Calu3 (cell line): ENCODE measurements at regions of chr5 and their contacts with region 1.

Region 1: GRCh38 chr5:112434641-112435040 is 15.6 kb upstream of the EPB41L4A start:
- DNase-seq: no peak
- H3K4me3 Mint-ChIP-seq: no peak overlapping the region
- H3K27ac Mint-ChIP-seq: no peak overlapping the region
- H3K4me1 Mint-ChIP-seq: peaks cover 20% of the 10 kb centered on the region
- H3K27me3 Mint-ChIP-seq: no peaks in the 10 kb centered on the region
- CTCF ChIP-seq: no peak

Region 2: GRCh38 chr5:111892949-111893348 is 541.7 kb before region 1 on chr5:
- CTCF ChIA-PET with region 1: no interaction called
- intact Hi-C with region 1: no loop called
- DNase-seq: no peak
- H3K4me3 Mint-ChIP-seq: no peak overlapping the region
- H3K27ac Mint-ChIP-seq: no peak overlapping the region
- H3K4me1 Mint-ChIP-seq: no peaks in the 10 kb centered on the region
- H3K27me3 Mint-ChIP-seq: no peaks in the 10 kb centered on the region
- CTCF ChIP-seq: no peak

Region 3: DNA sequence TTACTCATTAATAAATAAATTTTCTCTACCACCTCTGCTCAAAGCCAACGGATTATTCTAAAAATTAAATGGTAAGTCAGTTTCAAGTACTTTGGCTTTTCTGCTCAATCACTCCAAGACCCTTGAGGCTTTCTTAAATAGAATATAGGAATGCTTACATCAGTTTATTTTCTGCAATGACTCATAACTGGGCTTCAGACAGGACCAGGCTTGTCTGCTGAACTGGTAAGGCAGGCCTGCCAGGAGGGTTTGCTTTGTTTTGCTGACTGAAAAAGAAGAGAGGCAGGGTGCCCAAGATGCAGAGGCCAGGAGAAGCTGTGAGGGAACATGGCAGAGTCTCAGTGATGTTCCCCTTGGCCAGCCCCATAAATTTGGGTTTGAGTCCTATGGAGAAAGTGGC is 44.8 kb after region 1 on chr5:
- CTCF ChIA-PET with region 1: no interaction called
- intact Hi-C with region 1: loop called (anchors 5 kb)
- DNase-seq: peak; percentile 64
- H3K4me3 Mint-ChIP-seq: no peak overlapping the region
- H3K27ac Mint-ChIP-seq: no peak overlapping the region
- H3K4me1 Mint-ChIP-seq: peaks cover 31% of the 10 kb centered on the region
- H3K27me3 Mint-ChIP-seq: no peaks in the 10 kb centered on the region
- CTCF ChIP-seq: no peak

Region 4: GRCh38 chr5:112833971-112834370 is 399.3 kb after region 1 on chr5:
- CTCF ChIA-PET with region 1: no interaction called
- intact Hi-C with region 1: no loop called
- DNase-seq: no peak
- H3K4me3 Mint-ChIP-seq: no peak overlapping the region
- H3K27ac Mint-ChIP-seq: no peak overlapping the region
- H3K4me1 Mint-ChIP-seq: no peaks in the 10 kb centered on the region
- H3K27me3 Mint-ChIP-seq: no peaks in the 10 kb centered on the region
- CTCF ChIP-seq: no peak